ENCODE measurements at regions of chr6 and their contacts with region 1.

Region 1: GRCh38 chr6:52647199-52647598 is 23.7 kb upstream of the TMEM14A start:
- DNase-seq: no peak
- H3K4me3 ChIP-seq: no peak overlapping the region
- CTCF ChIP-seq: no peak

Region 2: GRCh38 chr6:52514514-52514913 is 132.7 kb before region 1 on chr6:
- CTCF ChIA-PET with region 1: interaction called, 13 read pairs
- POLR2A ChIA-PET with region 1: no interaction called
- DNase-seq: no peak
- H3K4me3 ChIP-seq: no peak overlapping the region
- CTCF ChIP-seq: no peak

Region 3: GRCh38 chr6:52566853-52567279 is 80.3 kb before region 1 on chr6:
- CTCF ChIA-PET with region 1: interaction called, 10 read pairs
- POLR2A ChIA-PET with region 1: no interaction called
- DNase-seq: peak; percentile 90
- H3K4me3 ChIP-seq: no peak overlapping the region
- CTCF ChIP-seq: no peak

Region 4: GRCh38 chr6:52598123-52598823 is 48.9 kb before region 1 on chr6:
- CTCF ChIA-PET with region 1: interaction called, 52 read pairs
- POLR2A ChIA-PET with region 1: interaction called, 6 read pairs
- DNase-seq: no peak
- H3K4me3 ChIP-seq: no peak overlapping the region
- CTCF ChIP-seq: peak; percentile 82

Region 5: GRCh38 chr6:52664186-52664990 is 17.2 kb after region 1 on chr6:
- CTCF ChIA-PET with region 1: interaction called, 148 read pairs
- POLR2A ChIA-PET with region 1: no interaction called
- DNase-seq: peak; percentile 65
- H3K4me3 ChIP-seq: peak overlapping the region; percentile 62
- CTCF ChIP-seq: no peak

Region 6: GRCh38 chr6:52691718-52692117 is 44.5 kb after region 1 on chr6:
- CTCF ChIA-PET with region 1: no interaction called
- POLR2A ChIA-PET with region 1: no interaction called
- DNase-seq: no peak
- H3K4me3 ChIP-seq: no peak overlapping the region
- CTCF ChIP-seq: no peak

Measured in AG04449 (cell line).